ENCODE measurements at regions of chr15 and their contacts with region 1.

Region 1: DNA sequence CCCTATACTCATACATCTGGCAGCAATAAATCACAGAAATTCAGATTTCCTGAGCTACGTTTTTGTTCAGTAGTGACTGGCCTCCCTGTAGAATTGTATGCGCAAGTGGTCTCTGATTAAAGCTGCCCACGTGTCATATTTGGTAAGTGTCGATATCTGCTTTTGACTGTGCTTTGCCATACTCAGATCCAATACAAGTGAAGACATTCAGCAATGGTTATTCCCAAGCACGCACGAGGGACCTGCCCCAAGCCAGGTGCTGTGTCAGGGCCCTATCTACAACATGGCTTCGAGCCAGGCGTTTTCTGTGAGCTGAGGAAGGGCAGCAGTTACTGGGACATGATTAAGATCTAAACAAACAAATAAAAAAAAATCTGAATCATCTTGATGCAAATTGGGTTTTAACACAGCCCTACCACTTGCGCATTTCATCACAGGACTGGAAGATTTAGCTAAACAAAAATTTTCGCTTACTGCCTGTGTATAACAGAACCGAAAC is 47.2 kb upstream of the ICE2 start:
- DNase-seq: peak; percentile 94
- ATAC-seq: peak; percentile 77
- H3K4me3 ChIP-seq: peak overlapping the region; percentile 55
- H3K27ac ChIP-seq: peak overlapping the region; percentile 62
- H3K4me1 ChIP-seq: peaks cover 66% of the 10 kb centered on the region
- H3K27me3 ChIP-seq: no peaks in the 10 kb centered on the region
- CTCF ChIP-seq: no peak

Region 2: DNA sequence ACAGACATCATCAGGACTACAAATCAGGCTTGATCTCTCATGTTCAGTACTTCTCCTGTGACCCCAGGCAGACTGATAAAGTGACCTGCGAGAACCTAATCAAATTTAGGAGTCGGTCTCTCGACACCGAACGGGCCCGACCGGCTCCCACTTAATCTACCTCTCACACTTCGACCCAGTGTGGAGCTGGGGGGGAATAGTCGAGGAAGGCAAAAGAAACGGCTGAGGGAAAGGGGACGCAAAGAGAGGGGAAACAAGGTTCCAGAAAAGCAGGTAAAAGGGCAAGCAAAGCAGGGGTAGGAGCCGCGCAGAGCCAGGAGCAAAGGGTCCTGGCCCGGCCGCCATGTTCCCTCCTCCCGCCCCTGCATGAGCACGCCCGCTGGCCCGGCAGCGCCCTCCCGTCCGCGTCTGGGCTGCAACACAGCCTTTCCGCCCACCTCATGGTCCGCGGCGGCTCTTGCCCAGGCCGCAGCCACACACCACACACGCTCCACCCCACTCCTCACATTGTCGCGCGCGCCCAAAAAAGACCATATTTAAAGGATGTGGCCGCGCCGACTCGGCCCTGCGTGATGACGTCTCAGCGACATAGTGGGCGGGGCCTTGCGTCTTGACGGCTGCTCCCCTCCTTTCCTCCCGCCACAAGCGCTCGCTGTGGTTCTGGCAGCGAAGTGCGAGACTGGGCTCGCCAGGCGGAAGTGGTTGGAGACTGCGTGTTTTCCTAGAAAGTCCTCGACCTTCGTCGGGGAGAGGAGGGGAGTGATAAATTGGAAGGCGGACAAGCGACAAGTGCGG is 47.4 kb before region 1 on chr15 and contains the start of gene ICE2:
- CTCF ChIA-PET with region 1: no interaction called
- POLR2A ChIA-PET with region 1: no interaction called
- intact Hi-C with region 1: loop called (anchors 2 kb)
- DNase-seq: peak; percentile 89
- ATAC-seq: peak; percentile 87
- H3K4me3 ChIP-seq: peak within 1 kb of the TSS; percentile 96
- H3K27ac ChIP-seq: peak within 1 kb of the TSS; percentile 82
- H3K4me1 ChIP-seq: peaks cover 33% of the 10 kb centered on the region
- H3K27me3 ChIP-seq: no peaks in the 10 kb centered on the region
- CTCF ChIP-seq: no peak
- total RNA-seq, gene ICE2: 14.8 and 23.7 TPM in 2 replicates

Region 3: GRCh38 chr15:60551781-60552161 is 25.6 kb after region 1 on chr15:
- CTCF ChIA-PET with region 1: interaction called, 3 read pairs
- POLR2A ChIA-PET with region 1: no interaction called
- intact Hi-C with region 1: loop called (anchors 2 kb)
- DNase-seq: peak; percentile 52
- ATAC-seq: peak; percentile 84
- H3K4me3 ChIP-seq: no peak overlapping the region
- H3K27ac ChIP-seq: no peak overlapping the region
- H3K4me1 ChIP-seq: no peaks in the 10 kb centered on the region
- H3K27me3 ChIP-seq: peaks cover 32% of the 10 kb centered on the region
- CTCF ChIP-seq: peak; percentile 74